Ascending aorta (tissue), 2 donors: ENCODE measurements at regions of chr9 and their contacts with region 1.

Region 1: GRCh38 chr9:121744002-121744686 is 92.7 kb downstream of the DAB2IP start:
- DNase-seq: peak in 1 of 2 donors; percentile 83
- H3K4me3 ChIP-seq: peak overlapping the region; percentile 53 to 69
- H3K27ac ChIP-seq: peak overlapping the region; percentile 94 to 96
- H3K4me1 ChIP-seq: peaks cover 25 to 63% of the 10 kb centered on the region in 2 donors
- H3K27me3 ChIP-seq: no peaks in the 10 kb centered on the region
- CTCF ChIP-seq: peak; percentile 40 to 60 (median 46)

Region 2: DNA sequence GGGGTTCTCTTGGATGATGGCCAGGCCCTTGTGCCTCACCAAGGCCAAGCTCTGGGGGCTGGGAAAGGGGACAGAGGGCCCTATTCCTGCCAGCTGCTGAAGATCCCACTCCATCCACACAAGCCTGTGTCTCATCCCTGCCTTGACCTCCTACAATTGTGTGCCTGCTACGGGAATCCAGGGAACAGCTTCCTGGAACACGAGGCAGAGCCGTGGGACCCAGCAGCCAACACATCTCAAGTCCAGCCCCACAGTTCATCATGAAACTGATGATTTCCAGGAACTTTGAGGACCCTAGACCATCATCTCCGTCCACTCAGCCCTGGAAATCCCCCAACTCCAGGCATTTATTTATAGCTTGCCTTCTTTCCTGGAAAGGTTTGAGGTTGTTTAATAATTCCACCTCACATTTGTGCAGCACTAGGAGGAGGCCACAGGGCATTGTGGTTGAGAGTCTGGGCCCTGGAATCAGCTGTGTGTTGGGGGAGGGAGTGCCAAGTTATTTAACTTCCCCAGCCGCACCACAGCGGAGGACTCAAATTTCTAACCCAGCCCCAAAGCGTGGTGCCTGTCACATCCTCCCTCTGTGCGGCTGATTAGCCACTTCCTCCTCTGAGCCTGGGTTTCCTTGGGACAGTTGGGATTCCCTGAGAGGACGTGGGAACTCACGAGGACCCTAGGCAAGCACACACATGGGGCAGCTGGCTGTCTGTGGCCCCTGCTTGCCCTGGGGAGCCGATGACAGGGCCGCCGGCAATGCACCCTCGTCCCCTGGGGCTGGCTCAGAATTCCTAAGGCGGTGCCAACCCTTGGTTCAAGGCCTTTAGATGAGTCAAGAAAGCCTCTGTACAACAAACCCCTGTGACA is 186.3 kb before region 1 on chr9:
- intact Hi-C with region 1: loop called (anchors 5 kb)
- DNase-seq: peak; percentile 55 to 95
- H3K4me3 ChIP-seq: peak overlapping the region in 1 of 2 donors; percentile 2
- H3K27ac ChIP-seq: peak overlapping the region; percentile 76 to 85
- H3K4me1 ChIP-seq: peaks cover 18 to 29% of the 10 kb centered on the region in 2 donors
- H3K27me3 ChIP-seq: no peaks in the 10 kb centered on the region
- CTCF ChIP-seq: peak in 1 of 3 experiments; percentile 14

Region 3: DNA sequence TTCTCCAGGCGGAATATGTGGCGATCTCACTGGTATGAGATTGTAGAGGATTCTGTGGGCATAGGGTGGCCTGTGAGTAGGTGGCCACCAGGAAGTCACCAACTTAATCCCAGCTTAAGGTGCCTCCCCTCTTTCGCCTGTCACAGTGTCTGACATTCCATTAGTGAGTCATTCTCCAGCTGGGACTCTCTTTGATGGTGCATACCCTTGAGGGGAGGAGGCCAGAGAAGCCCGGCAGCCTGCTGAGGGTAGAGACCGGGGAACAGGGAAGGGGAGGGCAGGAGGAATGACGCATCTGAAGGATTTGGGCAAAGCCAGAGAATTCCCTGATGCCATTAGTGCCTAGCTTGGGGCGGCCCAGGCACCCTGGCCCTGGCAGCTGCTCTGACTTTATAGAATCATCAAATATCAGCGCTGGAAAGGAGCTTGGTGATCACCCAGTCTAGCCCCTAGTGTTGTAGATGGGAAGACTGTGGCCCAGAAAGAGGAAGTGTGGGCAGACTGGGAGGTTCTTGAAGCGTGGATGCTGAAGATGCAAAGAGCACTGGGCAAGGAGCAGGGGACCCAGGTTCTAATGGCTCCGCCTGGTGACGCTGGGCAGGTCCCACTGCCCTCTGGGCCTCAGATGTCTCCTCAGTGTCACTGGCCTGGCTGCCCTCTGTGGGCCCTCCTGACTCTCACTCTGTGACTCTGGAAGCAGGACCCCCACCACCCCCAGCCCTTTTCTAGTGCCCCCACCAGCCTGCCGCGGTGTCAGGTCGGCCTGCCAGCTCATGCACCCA is 51.3 kb before region 1 on chr9:
- intact Hi-C with region 1: loop called (anchors 2 kb)
- DNase-seq: peak in 1 of 2 donors; percentile 84
- H3K4me3 ChIP-seq: no peak overlapping the region
- H3K27ac ChIP-seq: peak overlapping the region; percentile 85 to 86
- H3K4me1 ChIP-seq: peaks cover 6 to 17% of the 10 kb centered on the region in 2 donors
- H3K27me3 ChIP-seq: no peaks in the 10 kb centered on the region
- CTCF ChIP-seq: no peak

Region 4: DNA sequence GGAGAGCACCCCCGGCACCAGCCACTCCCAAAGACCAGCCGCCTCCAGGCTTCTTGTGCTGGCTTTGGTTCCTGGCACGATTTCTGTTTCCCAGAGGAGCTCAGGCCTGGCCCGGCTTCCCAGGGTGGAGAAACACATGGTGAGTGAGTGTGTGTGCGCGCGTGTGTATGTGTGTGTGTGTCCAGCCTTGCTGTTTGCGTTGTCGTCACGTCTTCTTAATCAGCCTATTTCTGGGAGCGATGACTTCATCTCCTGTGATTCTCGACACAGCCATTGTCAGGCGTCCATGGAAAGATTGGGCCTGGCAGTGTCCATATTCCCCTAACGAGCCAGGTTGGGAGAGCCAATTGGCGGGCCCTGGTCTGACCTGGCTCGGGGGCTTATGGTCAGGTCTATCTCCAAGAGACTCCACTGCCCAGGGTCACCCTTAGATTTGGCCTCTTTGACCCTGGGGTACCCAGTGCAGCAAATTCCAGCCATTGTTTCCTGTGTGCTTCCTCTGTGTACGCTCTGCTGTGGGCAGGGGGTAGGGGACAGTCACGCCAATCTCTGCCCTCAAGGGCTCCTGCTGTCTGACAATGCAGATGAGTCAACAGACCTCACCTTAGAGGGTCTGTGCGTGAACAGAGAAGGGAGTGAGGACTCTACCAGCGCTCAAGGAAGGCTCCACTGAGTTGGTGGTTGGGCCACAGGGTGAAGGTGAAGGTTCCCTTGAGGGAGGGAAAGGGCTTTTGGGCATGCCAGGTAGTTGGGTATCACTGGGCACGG is 19.0 kb before region 1 on chr9:
- intact Hi-C with region 1: loop called (anchors 2 kb)
- DNase-seq: peak; percentile 90 to 99
- H3K4me3 ChIP-seq: no peak overlapping the region
- H3K27ac ChIP-seq: peak overlapping the region; percentile 87
- H3K4me1 ChIP-seq: peaks cover 11 to 59% of the 10 kb centered on the region in 2 donors
- H3K27me3 ChIP-seq: no peaks in the 10 kb centered on the region
- CTCF ChIP-seq: no peak

Region 5: GRCh38 chr9:121770415-121771273 is 26.5 kb after region 1 on chr9:
- intact Hi-C with region 1: loop called (anchors 1 kb)
- DNase-seq: no peak
- H3K4me3 ChIP-seq: no peak overlapping the region
- H3K27ac ChIP-seq: peak overlapping the region; percentile 82 to 94
- H3K4me1 ChIP-seq: peaks cover 32 to 39% of the 10 kb centered on the region in 2 donors
- H3K27me3 ChIP-seq: no peaks in the 10 kb centered on the region
- CTCF ChIP-seq: no peak

Region 6: DNA sequence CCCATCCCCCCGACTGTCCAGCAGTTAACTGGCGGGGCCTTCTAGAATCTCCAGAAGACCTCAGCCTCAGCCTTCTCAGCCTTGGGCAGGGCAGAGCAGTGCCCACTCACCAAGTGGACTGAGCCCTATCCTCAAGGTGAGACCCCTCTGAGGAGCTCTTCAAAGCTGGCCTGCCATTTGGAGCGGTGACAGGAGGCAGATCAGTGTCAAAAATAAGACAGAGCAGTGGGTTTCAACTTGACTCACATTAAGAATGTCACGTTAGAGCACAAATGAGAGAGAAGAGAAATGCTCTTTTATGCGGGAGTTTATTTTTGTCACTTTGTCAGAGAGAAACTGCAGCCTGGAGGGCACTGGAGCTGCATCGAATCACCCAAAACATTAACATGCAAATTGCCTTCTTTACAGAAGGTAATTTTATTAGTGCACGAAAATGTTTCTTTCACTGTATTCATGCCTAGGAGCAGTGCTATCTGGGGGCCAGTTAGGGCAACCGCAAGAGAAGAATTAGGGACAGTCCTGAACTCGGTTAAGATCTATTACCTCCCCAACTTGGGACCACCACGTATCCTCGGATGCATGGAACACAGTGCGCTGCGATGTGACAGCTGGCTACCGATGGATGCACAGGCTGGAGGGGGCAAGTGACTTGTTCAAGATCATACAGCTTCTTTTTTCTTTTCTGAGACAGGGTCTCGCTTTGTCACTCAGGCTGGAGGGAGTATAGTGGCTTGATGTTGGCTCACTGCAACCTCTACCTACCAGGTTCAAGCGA is 95.8 kb after region 1 on chr9:
- intact Hi-C with region 1: no loop called
- DNase-seq: peak in 1 of 2 donors; percentile 22
- H3K4me3 ChIP-seq: no peak overlapping the region
- H3K27ac ChIP-seq: no peak overlapping the region
- H3K4me1 ChIP-seq: peaks cover 6 to 10% of the 10 kb centered on the region in 2 donors
- H3K27me3 ChIP-seq: no peaks in the 10 kb centered on the region
- CTCF ChIP-seq: no peak

Region 7: GRCh38 chr9:121992571-121993212 is 248.5 kb after region 1 on chr9:
- intact Hi-C with region 1: loop called (anchors 5 kb)
- DNase-seq: peak in 1 of 2 donors; percentile 76
- H3K4me3 ChIP-seq: no peak overlapping the region
- H3K27ac ChIP-seq: no peak overlapping the region
- H3K4me1 ChIP-seq: peaks cover 0 to 1% of the 10 kb centered on the region in 2 donors
- H3K27me3 ChIP-seq: no peaks in the 10 kb centered on the region
- CTCF ChIP-seq: peak; percentile 75 to 79 (median 78)

Region 8: GRCh38 chr9:122075135-122076030 is 331.2 kb after region 1 on chr9:
- intact Hi-C with region 1: loop called (anchors 5 kb)
- DNase-seq: peak in 1 of 2 donors; percentile 82
- H3K4me3 ChIP-seq: peak overlapping the region in 1 of 2 donors; percentile 50
- H3K27ac ChIP-seq: peak overlapping the region; percentile 91 to 97
- H3K4me1 ChIP-seq: peaks cover 10 to 35% of the 10 kb centered on the region in 2 donors
- H3K27me3 ChIP-seq: no peaks in the 10 kb centered on the region
- CTCF ChIP-seq: no peak